ENCODE measurements at regions of chr6 and their contacts with region 1.

Region 1: GRCh38 chr6:137707590-137708360 is 159.3 kb upstream of the TNFAIP3 start:
- DNase-seq: peak in 1 of 2 donors; percentile 71
- ATAC-seq: peak in 7 of 8 donors; percentile 57 to 73 (median 69)
- H3K4me3 ChIP-seq: peak overlapping the region in 3 of 10 donors; percentile 5 to 37 (median 20)
- H3K27ac ChIP-seq: peak overlapping the region in 1 of 10 donors; percentile 75
- H3K4me1 ChIP-seq: peaks cover 0 to 59% (median 13%) of the 10 kb centered on the region in 9 donors
- H3K27me3 ChIP-seq: no peaks in the 10 kb centered on the region
- CTCF ChIP-seq: peak; percentile 63 to 88 (median 80)

Region 2: DNA sequence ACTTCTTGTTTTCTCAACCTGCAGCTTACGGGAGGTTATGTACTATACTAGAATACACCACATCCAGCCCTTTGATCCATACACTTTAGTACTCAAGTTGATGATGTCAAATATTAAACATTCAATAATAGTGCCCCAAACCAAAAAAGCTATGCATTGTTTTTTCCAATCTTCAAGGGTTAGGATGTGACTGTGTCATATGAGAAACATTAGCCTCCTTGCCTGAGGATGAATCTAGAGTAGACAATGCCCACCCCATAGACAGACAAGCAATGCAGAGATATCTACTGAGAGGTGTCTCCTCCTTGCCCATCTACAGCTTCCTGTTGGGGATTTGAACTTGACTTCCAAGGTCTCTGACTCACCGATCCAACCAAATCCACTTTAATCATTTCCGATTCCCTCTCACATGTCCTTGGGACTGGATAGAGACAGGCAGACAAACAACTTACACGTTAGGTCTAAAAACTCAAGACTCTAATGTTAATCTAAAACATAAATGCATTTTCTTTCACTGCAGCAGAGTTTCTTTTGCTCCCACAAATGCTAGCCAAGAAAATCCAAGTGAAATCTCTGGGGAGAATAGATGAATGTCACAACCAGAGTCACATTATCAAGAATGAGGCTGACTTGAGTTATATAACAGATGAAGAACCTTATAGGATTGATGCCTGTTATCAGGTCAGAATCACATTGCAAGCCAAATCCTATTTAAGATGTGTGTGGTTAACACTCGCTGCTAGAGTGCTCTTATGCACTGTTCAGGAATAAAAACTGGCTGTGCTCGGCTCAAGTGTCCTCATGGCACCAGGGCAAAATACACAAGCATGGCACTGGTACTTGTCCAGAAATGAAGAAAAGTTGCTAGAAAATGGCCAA is 83.7 kb after region 1 on chr6:
- intact Hi-C with region 1: loop called in 2 of 10 experiments (anchors 5 kb)
- DNase-seq: no peak
- ATAC-seq: no peak
- H3K4me3 ChIP-seq: no peak overlapping the region
- H3K27ac ChIP-seq: peak overlapping the region in 3 of 10 donors; percentile 1 to 65 (median 52)
- H3K4me1 ChIP-seq: peaks cover 0 to 42% (median 6%) of the 10 kb centered on the region in 9 donors
- H3K27me3 ChIP-seq: no peaks in the 10 kb centered on the region
- CTCF ChIP-seq: no peak

Region 3: GRCh38 chr6:137866914-137867684 is 159.3 kb after region 1 on chr6 and contains the start of gene TNFAIP3:
- intact Hi-C with region 1: loop called (anchors 1 to 5 kb)
- DNase-seq: peak; percentile 92 to 93
- ATAC-seq: peak; percentile 93 to 97 (median 94)
- H3K4me3 ChIP-seq: peak within 1 kb of the TSS; percentile 75 to 99 (median 85)
- H3K27ac ChIP-seq: peak within 1 kb of the TSS; percentile 57 to 96 (median 88)
- H3K4me1 ChIP-seq: peaks cover 3 to 58% (median 39%) of the 10 kb centered on the region in 9 donors
- H3K27me3 ChIP-seq: no peaks in the 10 kb centered on the region
- CTCF ChIP-seq: peak; percentile 68 to 99 (median 82)
- total RNA-seq, gene TNFAIP3: 3.2 to 33.3 (median 9.6) TPM

Region 4: GRCh38 chr6:137944793-137945498 is 237.2 kb after region 1 on chr6:
- intact Hi-C with region 1: loop called (anchors 1 to 5 kb)
- DNase-seq: peak in 1 of 2 donors; percentile 31
- ATAC-seq: peak in 7 of 8 donors; percentile 72 to 89 (median 81)
- H3K4me3 ChIP-seq: no peak overlapping the region
- H3K27ac ChIP-seq: peak overlapping the region in 1 of 10 donors; percentile 3
- H3K4me1 ChIP-seq: peaks cover 0 to 11% (median 0%) of the 10 kb centered on the region in 9 donors
- H3K27me3 ChIP-seq: no peaks in the 10 kb centered on the region
- CTCF ChIP-seq: peak; percentile 63 to 86 (median 76)

Region 5: GRCh38 chr6:138001750-138002349 is 294.1 kb after region 1 on chr6:
- intact Hi-C with region 1: loop called in 5 of 10 experiments (anchors 2 to 10 kb)
- DNase-seq: peak in 1 of 2 donors; percentile 51
- ATAC-seq: peak in 3 of 8 donors; percentile 41 to 48 (median 47)
- H3K4me3 ChIP-seq: no peak overlapping the region
- H3K27ac ChIP-seq: no peak overlapping the region
- H3K4me1 ChIP-seq: peaks cover 0 to 3% (median 0%) of the 10 kb centered on the region in 9 donors
- H3K27me3 ChIP-seq: peaks cover 0 to 3% (median 0%) of the 10 kb centered on the region in 7 donors
- CTCF ChIP-seq: peak; percentile 67 to 91 (median 86)

Region 6: DNA sequence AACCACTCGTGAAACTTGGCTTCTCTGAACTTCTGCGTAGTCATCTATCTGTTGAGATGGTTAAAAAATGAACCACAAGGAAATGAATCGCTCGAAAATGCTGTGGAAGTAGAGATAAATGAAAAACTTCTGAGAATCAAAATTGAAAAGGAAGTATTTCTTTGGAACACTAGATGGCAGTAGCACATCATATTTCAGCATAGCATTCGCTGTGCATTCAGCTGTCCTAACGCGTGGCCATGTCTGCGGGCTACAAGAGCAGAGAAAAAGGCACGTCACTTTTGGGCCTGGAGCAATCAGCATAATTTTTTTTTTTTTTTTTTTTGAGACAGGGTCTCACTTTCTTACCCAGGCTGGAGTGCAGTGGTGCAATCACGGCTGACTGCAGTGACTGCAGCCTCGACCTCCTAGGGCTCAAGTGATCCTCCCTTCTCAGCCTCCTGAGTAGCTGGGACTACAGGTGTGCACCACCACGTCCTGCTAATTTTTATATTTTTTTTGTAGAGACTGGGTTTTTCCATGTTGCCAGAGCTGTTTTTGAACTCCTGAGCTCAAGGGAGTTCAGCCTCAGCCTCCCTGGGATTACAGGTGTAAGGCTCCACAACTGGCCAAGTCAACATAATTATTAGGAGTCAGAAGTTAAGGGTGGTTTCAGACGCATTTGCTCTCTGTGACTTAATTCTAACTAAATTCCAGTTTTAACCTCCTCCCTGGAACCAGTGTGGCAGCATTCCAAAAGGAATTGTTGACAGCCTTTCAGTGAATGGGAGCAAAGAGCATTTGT is 408.3 kb after region 1 on chr6:
- intact Hi-C with region 1: loop called in 1 of 10 experiments (anchors 10 kb)
- DNase-seq: peak; percentile 34 to 45
- ATAC-seq: peak; percentile 69 to 88 (median 82)
- H3K4me3 ChIP-seq: no peak overlapping the region
- H3K27ac ChIP-seq: no peak overlapping the region
- H3K4me1 ChIP-seq: peaks cover 0 to 7% (median 0%) of the 10 kb centered on the region in 9 donors
- H3K27me3 ChIP-seq: peaks cover 0 to 10% (median 5%) of the 10 kb centered on the region in 7 donors
- CTCF ChIP-seq: peak; percentile 63 to 84 (median 74)